Activated CD4-positive, alpha-beta T cell treated with anti-CD3 and anti-CD28 coated beads for 36 hours (primary cell): ENCODE measurements at regions of chr14 and their contacts with region 1.

Region 1: DNA sequence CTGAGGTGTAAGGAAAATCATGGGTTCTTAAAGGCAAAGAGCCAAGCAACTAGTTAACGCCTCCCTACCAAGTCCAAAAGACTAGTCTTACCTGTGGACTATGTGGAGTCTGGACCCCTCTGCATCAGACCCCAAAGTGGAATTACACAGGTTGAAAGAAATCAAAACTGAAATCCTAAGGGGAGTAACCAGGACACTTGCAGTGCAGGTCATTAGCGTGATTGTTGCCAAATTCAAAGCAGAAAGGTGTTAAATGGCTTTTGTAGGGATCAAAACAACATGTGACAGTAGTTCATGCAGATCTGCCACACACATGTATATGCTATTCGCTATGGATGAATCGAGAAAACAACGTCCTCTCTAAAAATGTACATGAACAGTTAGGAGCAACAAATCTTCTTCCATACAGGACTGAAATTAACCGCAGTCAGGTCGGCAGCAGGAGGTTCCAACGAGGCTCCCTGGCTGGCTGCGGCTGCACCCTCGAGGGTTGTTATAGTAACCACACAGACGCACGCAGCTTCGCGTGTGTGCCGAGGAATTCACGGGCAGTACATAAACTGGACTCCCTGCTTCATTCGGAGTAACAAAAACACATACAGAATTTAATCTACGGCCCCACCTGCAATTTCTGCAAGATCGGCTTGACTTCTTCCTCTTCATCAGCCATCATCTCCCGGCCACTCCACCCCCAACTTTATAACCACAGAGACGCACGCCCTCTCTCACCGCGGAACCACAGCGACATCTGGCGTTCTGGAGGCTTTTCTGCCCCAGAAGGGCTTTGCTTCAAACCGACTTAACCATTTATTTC is at the start of gene TTC5:
- DNase-seq: peak; percentile 92
- ATAC-seq: peak; percentile 98
- H3K4me3 Mint-ChIP-seq: peak within 1 kb of the TSS; percentile 82
- H3K27ac Mint-ChIP-seq: peak within 1 kb of the TSS; percentile 82
- H3K4me1 Mint-ChIP-seq: peaks cover 23% of the 10 kb centered on the region
- H3K27me3 Mint-ChIP-seq: no peaks in the 10 kb centered on the region
- total RNA-seq, gene TTC5: 21.6 to 23.5 TPM

Region 2: GRCh38 chr14:20327005-20327869 is 21.8 kb after region 1 on chr14:
- CTCF ChIA-PET with region 1: interaction called, 13 read pairs
- POLR2A ChIA-PET with region 1: no interaction called
- intact Hi-C with region 1: loop called in 1 of 2 experiments (anchors 2 kb)
- DNase-seq: no peak
- ATAC-seq: peak; percentile 71
- H3K4me3 Mint-ChIP-seq: no peak overlapping the region
- H3K27ac Mint-ChIP-seq: peak overlapping the region; percentile 44
- H3K4me1 Mint-ChIP-seq: peaks cover 37% of the 10 kb centered on the region
- H3K27me3 Mint-ChIP-seq: no peaks in the 10 kb centered on the region

Region 3: GRCh38 chr14:20332788-20333493 is 27.5 kb after region 1 on chr14 and contains the start of gene CCNB1IP1:
- CTCF ChIA-PET with region 1: interaction called, 13 read pairs
- POLR2A ChIA-PET with region 1: no interaction called
- intact Hi-C with region 1: loop called in 1 of 2 experiments (anchors 2 kb)
- DNase-seq: peak; percentile 59
- ATAC-seq: peak; percentile 99
- H3K4me3 Mint-ChIP-seq: peak within 1 kb of the TSS; percentile 98
- H3K27ac Mint-ChIP-seq: peak within 1 kb of the TSS; percentile 95
- H3K4me1 Mint-ChIP-seq: peaks cover 35% of the 10 kb centered on the region
- H3K27me3 Mint-ChIP-seq: no peaks in the 10 kb centered on the region
- total RNA-seq, gene CCNB1IP1: 57.4 to 67.0 TPM

Region 4: DNA sequence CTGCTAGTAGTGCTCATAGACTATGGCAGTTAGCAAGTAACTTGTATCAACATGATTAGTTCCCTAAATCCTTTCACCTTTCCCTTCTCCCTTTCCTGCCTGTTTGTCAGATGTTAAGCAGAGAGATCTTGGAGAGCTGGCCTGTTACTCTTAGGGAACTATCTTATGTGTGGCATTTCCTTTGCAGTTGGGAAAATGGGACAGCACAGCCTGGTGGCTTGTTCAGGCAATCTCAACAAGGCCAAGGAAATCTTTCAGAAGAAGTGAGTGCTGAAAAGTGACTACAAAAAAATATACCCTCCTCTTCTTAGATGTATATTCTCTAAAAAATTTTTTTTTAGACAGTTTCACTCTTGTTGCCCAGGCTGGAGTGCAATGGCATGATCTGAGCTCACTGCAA is 45.4 kb after region 1 on chr14:
- CTCF ChIA-PET with region 1: no interaction called
- POLR2A ChIA-PET with region 1: no interaction called
- intact Hi-C with region 1: no loop called
- DNase-seq: no peak
- ATAC-seq: no peak
- H3K4me3 Mint-ChIP-seq: no peak overlapping the region
- H3K27ac Mint-ChIP-seq: no peak overlapping the region
- H3K4me1 Mint-ChIP-seq: no peaks in the 10 kb centered on the region
- H3K27me3 Mint-ChIP-seq: no peaks in the 10 kb centered on the region

Region 5: GRCh38 chr14:21071225-21072030 is 766.0 kb after region 1 on chr14:
- CTCF ChIA-PET with region 1: no interaction called
- POLR2A ChIA-PET with region 1: no interaction called
- intact Hi-C with region 1: no loop called
- DNase-seq: peak; percentile 83
- ATAC-seq: peak; percentile 72
- H3K4me3 Mint-ChIP-seq: peak overlapping the region; percentile 63
- H3K27ac Mint-ChIP-seq: no peak overlapping the region
- H3K4me1 Mint-ChIP-seq: peaks cover 33% of the 10 kb centered on the region
- H3K27me3 Mint-ChIP-seq: peaks cover 54% of the 10 kb centered on the region